ENCODE measurements at regions of chr11 and their contacts with region 1.

Region 1: DNA sequence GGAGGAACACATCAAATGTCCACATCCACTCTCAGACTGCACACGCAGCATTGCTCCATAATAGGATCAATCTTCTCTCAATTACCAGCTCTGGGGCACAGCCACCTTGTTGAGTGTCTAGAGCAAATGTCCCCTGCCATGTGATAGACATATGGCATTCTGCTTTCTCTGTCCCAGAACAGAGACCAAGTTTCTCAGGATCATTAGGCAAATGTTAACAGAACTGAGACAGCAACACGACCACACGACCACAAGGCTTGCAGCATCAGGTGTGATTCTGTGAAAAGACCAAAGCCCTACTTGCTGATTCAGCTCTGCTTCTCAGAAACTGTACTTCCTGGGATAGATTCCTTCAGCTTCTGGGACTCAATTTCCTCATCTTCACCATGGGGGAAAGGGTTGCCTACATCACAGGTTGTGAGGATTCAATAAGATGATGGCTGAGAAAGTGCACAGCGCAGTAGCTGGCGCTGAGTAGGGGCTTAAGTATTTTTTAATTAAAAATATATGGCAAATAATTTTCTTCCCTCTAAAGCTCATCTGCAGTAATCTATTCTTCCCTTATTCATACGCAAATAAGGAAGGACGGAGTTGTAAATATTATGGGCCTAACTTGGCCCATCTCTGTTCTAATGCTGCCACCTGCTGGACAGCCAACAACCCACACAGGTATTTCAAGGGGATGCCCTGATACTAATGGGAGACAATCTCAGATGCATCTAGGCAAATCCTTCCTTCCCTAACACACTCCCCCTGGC is 54.3 kb upstream of the USP47 start:
- DNase-seq: peak; percentile 41
- H3K4me3 ChIP-seq: no peak overlapping the region
- H3K27ac ChIP-seq: no peak overlapping the region
- H3K27me3 ChIP-seq: peaks cover 5% of the 10 kb centered on the region
- CTCF ChIP-seq: peak; percentile 90

Region 2: GRCh38 chr11:10792398-10792975 is 995.0 kb before region 1 on chr11:
- CTCF ChIA-PET with region 1: interaction called, 14 read pairs
- POLR2A ChIA-PET with region 1: no interaction called
- DNase-seq: peak; percentile 32
- H3K4me3 ChIP-seq: peak overlapping the region; percentile 30; the same call in 1 of the 2 replicates
- H3K27ac ChIP-seq: no peak overlapping the region
- H3K27me3 ChIP-seq: no peaks in the 10 kb centered on the region
- CTCF ChIP-seq: peak; percentile 85

Region 3: DNA sequence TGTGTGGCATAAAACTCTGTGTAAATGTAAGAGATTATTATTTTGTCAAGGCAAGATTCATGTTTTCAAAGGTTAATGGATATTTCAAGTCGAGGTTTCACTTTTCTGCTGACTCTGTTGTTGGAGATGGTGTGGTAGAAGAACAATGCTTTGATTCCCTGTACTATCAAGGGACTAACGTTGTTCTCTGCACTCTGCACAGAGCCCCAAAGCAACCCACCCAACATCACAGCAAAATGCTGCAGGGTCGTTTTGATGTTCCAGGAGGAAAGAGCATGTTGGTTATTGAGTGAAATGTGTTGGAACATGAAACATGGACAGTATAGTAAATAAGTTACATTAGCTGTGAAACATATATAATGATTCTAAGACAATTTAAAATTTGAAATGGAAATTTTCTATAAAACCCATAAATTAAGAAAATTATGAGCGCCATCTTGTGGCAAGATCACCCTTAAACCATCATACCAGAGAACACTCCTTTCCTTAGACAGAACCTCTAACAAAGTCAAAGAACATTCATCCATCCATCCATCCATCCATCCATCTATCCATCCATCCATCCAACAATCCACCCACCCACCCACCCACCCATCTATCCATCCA is 765.3 kb before region 1 on chr11:
- CTCF ChIA-PET with region 1: interaction called, 177 read pairs
- POLR2A ChIA-PET with region 1: no interaction called
- DNase-seq: no peak
- H3K4me3 ChIP-seq: no peak overlapping the region
- H3K27ac ChIP-seq: no peak overlapping the region
- H3K27me3 ChIP-seq: peaks cover 12% of the 10 kb centered on the region
- CTCF ChIP-seq: peak; percentile 52

Region 4: GRCh38 chr11:11036848-11037732 is 750.4 kb before region 1 on chr11:
- CTCF ChIA-PET with region 1: interaction called, 121 read pairs
- POLR2A ChIA-PET with region 1: no interaction called
- DNase-seq: no peak
- H3K4me3 ChIP-seq: no peak overlapping the region
- H3K27ac ChIP-seq: no peak overlapping the region
- H3K27me3 ChIP-seq: peaks cover under 1% of the 10 kb centered on the region
- CTCF ChIP-seq: peak; percentile 70

Region 5: GRCh38 chr11:11806586-11806985 is 19.1 kb after region 1 on chr11:
- CTCF ChIA-PET with region 1: interaction called, 16 read pairs
- POLR2A ChIA-PET with region 1: no interaction called
- DNase-seq: no peak
- H3K4me3 ChIP-seq: no peak overlapping the region
- H3K27ac ChIP-seq: no peak overlapping the region
- H3K27me3 ChIP-seq: no peaks in the 10 kb centered on the region
- CTCF ChIP-seq: no peak